Panc1 (cell line): ENCODE measurements at regions of chr12 and their contacts with region 1.

Region 1: DNA sequence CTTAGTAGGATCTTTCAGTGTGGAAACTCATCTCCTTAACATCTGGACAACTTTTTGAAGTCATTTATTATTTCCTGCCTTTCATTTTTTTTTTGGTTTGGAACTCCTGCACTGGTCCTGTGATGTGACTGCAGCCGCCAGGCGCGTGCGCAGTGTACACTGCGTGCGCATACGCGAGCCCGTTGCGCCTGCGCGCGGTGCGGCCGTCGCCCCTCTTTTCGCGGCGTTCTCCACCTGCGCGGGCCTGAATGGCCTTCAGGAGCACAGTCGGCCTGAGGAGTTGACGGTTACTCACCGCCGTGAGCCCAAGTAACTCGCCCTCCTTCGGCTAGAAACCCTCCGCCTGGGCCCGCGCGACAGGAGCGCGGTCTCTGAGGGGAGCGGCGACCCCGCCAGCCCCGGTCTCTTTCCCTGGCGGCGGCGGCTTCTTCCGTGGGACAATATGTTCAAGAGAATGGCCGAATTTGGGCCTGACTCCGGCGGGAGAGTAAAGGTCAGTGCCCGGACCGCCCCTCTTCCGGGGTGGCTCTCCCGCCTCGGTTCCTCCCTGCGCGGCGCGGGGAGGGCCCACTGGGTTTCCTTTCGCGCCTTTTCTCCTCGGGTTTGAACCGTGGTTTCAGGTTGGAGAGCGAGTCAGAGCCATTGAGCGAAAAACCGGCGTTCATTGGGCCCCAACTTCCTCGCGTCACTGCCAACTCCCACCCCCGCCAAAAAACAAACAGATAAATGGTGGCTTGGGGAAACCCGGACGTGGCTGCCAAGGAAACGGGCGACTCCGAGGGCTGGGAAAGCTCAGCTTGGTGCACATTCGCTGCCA is at the start of gene YEATS4:
- DNase-seq: peak; percentile 56
- ATAC-seq: peak; percentile 93
- H3K4me3 ChIP-seq: peak within 1 kb of the TSS; percentile 65 to 71
- H3K27ac ChIP-seq: peak within 1 kb of the TSS; percentile 99
- H3K4me1 ChIP-seq: peaks cover 6% of the 10 kb centered on the region
- H3K27me3 ChIP-seq: no peaks in the 10 kb centered on the region
- CTCF ChIP-seq: no peak
- total RNA-seq, gene YEATS4: 20.9 TPM

Region 2: GRCh38 chr12:69211160-69211559 is 148.6 kb before region 1 on chr12:
- CTCF ChIA-PET with region 1: interaction called, 10 read pairs
- POLR2A ChIA-PET with region 1: no interaction called
- in situ Hi-C with region 1: no loop called
- intact Hi-C with region 1: no loop called
- DNase-seq: no peak
- ATAC-seq: no peak
- H3K4me3 ChIP-seq: no peak overlapping the region
- H3K27ac ChIP-seq: no peak overlapping the region
- H3K4me1 ChIP-seq: no peaks in the 10 kb centered on the region
- H3K27me3 ChIP-seq: no peaks in the 10 kb centered on the region
- CTCF ChIP-seq: no peak

Region 3: GRCh38 chr12:69470189-69471075 is 110.7 kb after region 1 on chr12 and contains the start of gene FRS2:
- CTCF ChIA-PET with region 1: interaction called, 11 read pairs
- POLR2A ChIA-PET with region 1: no interaction called
- in situ Hi-C with region 1: no loop called
- intact Hi-C with region 1: no loop called
- DNase-seq: peak; percentile 38
- ATAC-seq: peak; percentile 99
- H3K4me3 ChIP-seq: peak within 1 kb of the TSS; percentile 80 to 94
- H3K27ac ChIP-seq: peak within 1 kb of the TSS; percentile 99
- H3K4me1 ChIP-seq: peaks cover 38% of the 10 kb centered on the region
- H3K27me3 ChIP-seq: no peaks in the 10 kb centered on the region
- CTCF ChIP-seq: peak; percentile 62; the same call in 1 of the 2 replicates
- total RNA-seq, gene FRS2: 26.6 TPM

Region 4: DNA sequence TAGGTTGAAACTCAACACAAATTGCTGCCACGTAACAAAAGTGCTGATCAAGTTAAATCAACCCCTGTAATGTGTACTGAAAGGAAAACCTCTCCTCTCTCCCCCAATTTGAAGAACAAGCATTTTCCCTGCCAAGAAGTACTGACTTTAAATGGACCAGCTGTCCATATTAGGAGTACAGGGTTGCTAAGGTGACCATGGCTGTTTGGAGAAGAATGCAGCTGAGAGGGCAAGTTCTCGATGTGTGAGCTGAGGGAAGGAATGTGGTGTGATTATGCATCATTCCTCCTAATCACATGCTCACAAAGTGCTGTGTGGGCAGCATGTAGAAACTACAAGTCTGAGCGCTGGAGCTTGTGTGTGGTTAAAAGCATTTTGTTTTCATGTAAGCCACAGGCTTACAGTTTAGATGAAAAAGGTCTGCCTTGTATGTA is 174.7 kb after region 1 on chr12:
- CTCF ChIA-PET with region 1: interaction called, 11 read pairs
- POLR2A ChIA-PET with region 1: no interaction called
- in situ Hi-C with region 1: no loop called
- intact Hi-C with region 1: no loop called
- DNase-seq: peak; percentile 50
- ATAC-seq: peak; percentile 91
- H3K4me3 ChIP-seq: no peak overlapping the region
- H3K27ac ChIP-seq: no peak overlapping the region
- H3K4me1 ChIP-seq: no peaks in the 10 kb centered on the region
- H3K27me3 ChIP-seq: no peaks in the 10 kb centered on the region
- CTCF ChIP-seq: no peak

Region 5: DNA sequence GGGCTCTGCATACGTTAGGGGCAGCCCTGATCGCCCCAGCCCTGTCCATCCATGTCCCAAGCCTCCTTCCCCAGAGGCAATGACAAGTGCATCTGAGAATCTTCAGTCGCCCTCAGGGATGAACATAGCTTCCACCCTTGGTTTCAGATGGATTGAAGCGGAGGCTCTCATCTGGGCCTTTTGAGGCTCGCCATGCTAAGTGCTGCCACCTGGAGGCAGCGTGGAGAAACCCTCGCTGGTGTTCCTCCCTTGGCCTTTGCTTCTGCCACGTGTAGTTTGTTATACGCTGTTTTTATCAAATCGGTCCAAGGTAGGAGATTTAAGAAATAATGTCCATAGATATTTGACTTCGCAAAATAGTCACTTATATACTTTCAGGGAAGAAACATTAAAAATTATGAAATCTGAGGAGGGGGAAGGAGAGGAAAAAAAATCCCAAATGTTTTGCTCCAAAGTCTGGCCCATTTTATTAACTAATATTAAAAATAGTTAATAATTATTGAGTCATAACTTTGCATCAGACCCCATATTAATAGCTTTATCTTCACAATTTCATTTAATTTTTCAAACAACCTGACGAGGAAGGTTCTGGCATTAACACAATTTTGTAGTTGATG is 279.8 kb after region 1 on chr12:
- CTCF ChIA-PET with region 1: interaction called, 24 read pairs
- POLR2A ChIA-PET with region 1: no interaction called
- in situ Hi-C with region 1: no loop called
- intact Hi-C with region 1: loop called (anchors 5 kb)
- DNase-seq: peak; percentile 33
- ATAC-seq: peak; percentile 91
- H3K4me3 ChIP-seq: no peak overlapping the region
- H3K27ac ChIP-seq: no peak overlapping the region
- H3K4me1 ChIP-seq: no peaks in the 10 kb centered on the region
- H3K27me3 ChIP-seq: no peaks in the 10 kb centered on the region
- CTCF ChIP-seq: peak; percentile 94